ENCODE measurements at regions of chr16 and their contacts with region 1.

Region 1: DNA sequence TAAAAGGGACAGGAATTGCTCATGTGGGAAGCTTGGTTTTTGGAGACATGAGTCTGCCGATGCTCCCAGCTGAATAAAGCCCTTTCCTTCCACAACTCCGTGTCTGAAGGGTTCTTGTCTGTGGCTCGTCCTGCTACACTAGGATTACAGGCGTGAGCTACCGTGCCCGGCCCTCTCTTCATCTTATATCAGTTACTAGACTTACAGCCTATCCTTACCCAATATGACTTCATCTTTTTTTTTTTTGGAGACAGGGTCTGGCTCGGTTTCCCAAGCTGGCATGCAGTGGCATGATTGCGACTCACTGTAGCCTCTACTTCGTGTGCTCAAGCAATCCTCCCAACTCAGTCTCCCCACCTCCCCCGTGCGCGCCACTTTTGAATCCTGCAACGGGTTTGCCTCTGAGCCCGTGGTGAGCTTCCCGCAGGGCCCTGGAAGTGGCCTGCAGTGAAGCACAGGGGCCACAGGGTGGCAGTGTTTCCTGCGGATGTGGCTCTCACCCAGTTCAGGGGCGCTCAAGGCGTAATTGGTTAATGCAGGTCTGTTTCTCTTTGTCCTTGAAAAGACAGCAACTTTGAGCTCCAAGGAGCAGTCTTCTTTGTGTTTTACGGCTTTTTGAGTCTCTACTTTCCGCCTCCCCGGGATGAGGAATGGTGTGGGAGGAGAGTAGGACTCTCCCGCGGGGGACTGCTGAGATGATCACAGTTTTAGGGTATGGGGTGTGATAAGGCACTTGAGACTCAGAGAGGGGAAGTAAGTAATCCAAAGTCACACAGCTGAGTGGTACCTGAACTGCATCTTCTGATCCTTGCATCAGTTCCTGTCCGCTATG is 22.7 kb upstream of the GPRC5B start:
- DNase-seq: peak; percentile 45 to 88 (median 74)

Region 2: DNA sequence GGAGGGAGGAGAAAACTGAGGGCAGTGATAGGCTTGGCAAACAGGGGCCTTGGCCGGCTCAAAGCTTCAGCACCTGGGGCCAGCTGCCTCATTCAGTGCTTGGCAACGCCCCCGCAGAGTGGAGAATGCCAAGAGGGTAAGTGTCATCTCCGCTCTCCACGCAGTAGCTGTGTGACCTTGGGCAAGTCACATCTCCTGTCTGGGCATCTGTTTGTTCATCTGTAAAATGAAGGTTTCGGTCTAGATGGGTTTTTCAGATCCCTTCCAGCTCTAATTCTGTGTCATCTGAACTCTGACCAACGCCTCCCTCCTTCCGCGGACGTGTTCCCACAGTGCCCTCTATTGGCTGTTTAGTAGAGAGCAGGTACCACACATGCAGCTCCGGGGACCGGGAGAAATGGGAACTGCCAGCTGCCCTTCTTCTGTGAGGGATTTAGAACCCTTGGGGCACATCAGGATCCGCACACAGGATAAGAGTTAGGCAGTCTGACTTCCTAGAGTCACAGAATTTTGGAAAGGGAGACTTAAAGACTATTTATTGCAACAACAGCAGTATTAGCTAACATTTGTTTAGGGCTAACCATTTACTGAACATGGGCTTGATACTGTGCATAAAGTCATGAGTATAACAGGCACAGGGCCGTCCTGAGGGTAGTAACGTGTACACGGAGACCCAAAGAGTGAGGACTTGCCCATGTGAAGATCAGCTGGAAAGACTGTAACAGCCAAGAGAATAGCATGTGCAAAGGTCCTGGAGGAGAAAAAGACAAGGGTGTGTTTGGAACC is 393.1 kb after region 1 on chr16:
- intact Hi-C with region 1: loop called (anchors 10 kb)
- DNase-seq: peak; percentile 18 to 84 (median 56)

Region 3: GRCh38 chr16:20383106-20384029 is 476.0 kb after region 1 on chr16:
- intact Hi-C with region 1: loop called (anchors 5 kb)
- DNase-seq: peak; percentile 24 to 87 (median 68)